CD8-positive, alpha-beta T cell (primary cell): ENCODE measurements at regions of chr5 and their contacts with region 1.

Region 1: DNA sequence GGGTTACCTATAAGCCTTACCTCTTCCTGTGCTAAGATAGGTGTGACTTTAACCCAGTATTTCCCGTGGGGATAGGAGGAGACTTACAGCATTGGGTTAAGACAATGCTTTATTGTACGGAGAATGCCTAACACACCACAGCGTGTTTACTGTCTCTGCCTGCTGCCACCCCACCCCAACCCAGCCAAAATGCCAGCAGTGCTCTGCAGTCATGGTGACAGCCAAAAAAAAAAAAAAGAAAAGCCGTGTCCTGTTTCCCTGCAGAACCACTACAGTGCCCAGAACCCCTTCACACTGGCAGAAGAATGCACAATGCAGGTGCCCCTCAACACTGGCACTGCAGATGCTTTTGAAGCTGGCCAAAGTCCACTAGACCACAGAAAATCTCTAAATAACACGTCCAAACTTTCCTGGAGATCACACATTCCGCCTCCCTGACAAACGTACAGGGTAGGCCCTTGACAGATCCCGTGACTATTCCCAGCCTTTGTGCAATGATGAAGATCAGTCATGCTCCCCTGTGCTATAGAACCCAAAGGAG is 102.2 kb downstream of the SERINC5 start:
- DNase-seq: peak in 6 of 9 experiments; percentile 35 to 76 (median 46)
- ATAC-seq: peak; percentile 66
- H3K4me3 ChIP-seq: no peak overlapping the region
- H3K4me3 Mint-ChIP-seq: peak overlapping the region; percentile 45
- H3K27ac ChIP-seq: peak overlapping the region; percentile 25 to 64
- H3K27ac Mint-ChIP-seq: peak overlapping the region; percentile 92
- H3K4me1 ChIP-seq: peaks cover 55% of the 10 kb centered on the region
- H3K4me1 Mint-ChIP-seq: peaks cover 65% of the 10 kb centered on the region
- H3K27me3 ChIP-seq: no peaks in the 10 kb centered on the region
- H3K27me3 Mint-ChIP-seq: no peaks in the 10 kb centered on the region
- CTCF ChIP-seq: no peak

Region 2: GRCh38 chr5:80141147-80141671 is 12.4 kb before region 1 on chr5:
- CTCF ChIA-PET with region 1: interaction called, 7 read pairs
- POLR2A ChIA-PET with region 1: interaction called, 22 read pairs
- intact Hi-C with region 1: loop called in 1 of 2 experiments (anchors 2 kb)
- DNase-seq: peak in 1 of 9 experiments; percentile 47
- ATAC-seq: no peak
- H3K4me3 ChIP-seq: no peak overlapping the region
- H3K4me3 Mint-ChIP-seq: peak overlapping the region; percentile 50
- H3K27ac ChIP-seq: peak overlapping the region; percentile 9 to 55
- H3K27ac Mint-ChIP-seq: peak overlapping the region; percentile 91
- H3K4me1 ChIP-seq: peaks cover 70% of the 10 kb centered on the region
- H3K4me1 Mint-ChIP-seq: peaks cover 74% of the 10 kb centered on the region
- H3K27me3 ChIP-seq: no peaks in the 10 kb centered on the region
- H3K27me3 Mint-ChIP-seq: no peaks in the 10 kb centered on the region
- CTCF ChIP-seq: no peak

Region 3: DNA sequence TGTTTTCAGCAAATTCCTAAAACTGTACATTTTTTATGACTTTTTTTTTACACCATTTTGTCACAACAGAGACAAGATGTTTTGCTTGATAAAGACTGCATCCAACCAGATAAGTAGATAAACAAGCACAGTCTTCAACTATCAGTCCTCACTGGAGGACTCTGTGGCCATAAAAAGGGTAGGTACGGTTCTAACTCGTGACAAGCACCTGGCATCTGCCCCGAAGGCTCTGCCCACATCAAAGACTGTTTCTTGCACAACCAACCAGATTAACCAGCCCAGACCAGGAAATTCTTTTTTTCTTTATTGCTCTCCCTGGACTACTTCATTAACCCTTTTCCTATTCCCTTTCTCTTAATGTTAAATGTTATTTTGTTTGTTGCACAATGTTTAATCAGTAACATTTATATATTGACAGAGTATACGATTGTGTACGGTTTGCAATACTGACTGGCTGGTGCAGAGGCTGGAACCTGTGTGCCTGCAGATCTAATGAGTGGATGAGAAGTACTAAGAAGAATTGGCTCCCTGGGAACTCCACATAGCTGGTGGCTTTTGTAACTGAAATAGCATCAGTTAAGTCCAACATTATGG is 28.1 kb after region 1 on chr5:
- CTCF ChIA-PET with region 1: interaction called, 3 read pairs
- POLR2A ChIA-PET with region 1: interaction called, 6 read pairs
- intact Hi-C with region 1: loop called in 1 of 2 experiments (anchors 5 kb)
- DNase-seq: peak in 7 of 9 experiments; percentile 42 to 85 (median 67)
- ATAC-seq: peak; percentile 32
- H3K4me3 ChIP-seq: peak overlapping the region in 1 of 2 experiments; percentile 3
- H3K4me3 Mint-ChIP-seq: peak overlapping the region; percentile 64
- H3K27ac ChIP-seq: peak overlapping the region; percentile 20 to 23
- H3K27ac Mint-ChIP-seq: peak overlapping the region; percentile 96
- H3K4me1 ChIP-seq: peaks cover 89% of the 10 kb centered on the region
- H3K4me1 Mint-ChIP-seq: peaks cover 87% of the 10 kb centered on the region
- H3K27me3 ChIP-seq: no peaks in the 10 kb centered on the region
- H3K27me3 Mint-ChIP-seq: no peaks in the 10 kb centered on the region
- CTCF ChIP-seq: no peak

Region 4: DNA sequence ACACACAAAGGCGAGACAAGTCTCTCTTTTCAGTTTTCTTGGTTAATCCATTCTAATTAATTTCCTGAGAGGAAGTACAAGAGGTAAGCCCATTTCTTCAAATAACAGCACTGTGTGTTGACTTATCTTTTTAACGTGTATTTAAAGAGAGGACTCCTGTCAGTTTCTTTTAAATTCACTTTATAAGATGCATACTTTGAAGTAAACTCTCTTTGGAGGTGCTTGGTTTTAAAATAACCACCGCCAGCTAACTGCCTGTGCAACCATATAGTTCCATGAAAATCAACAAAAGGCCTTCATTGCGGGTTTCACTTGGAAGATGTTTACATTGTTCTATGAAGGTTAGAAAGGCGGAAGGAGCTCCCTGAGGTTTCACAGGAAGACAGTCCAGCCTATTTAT is 115.3 kb after region 1 on chr5:
- CTCF ChIA-PET with region 1: interaction called, 3 read pairs
- POLR2A ChIA-PET with region 1: interaction called, 3 read pairs
- intact Hi-C with region 1: loop called in 1 of 2 experiments (anchors 5 kb)
- DNase-seq: peak in 1 of 9 experiments; percentile 33
- ATAC-seq: peak; percentile 16
- H3K4me3 ChIP-seq: no peak overlapping the region
- H3K4me3 Mint-ChIP-seq: peak overlapping the region; percentile 69
- H3K27ac ChIP-seq: no peak overlapping the region
- H3K27ac Mint-ChIP-seq: peak overlapping the region; percentile 95
- H3K4me1 ChIP-seq: peaks cover 41% of the 10 kb centered on the region
- H3K4me1 Mint-ChIP-seq: peaks cover 50% of the 10 kb centered on the region
- H3K27me3 ChIP-seq: no peaks in the 10 kb centered on the region
- H3K27me3 Mint-ChIP-seq: no peaks in the 10 kb centered on the region
- CTCF ChIP-seq: no peak